IMR-90 (cell line): ENCODE measurements at regions of chr1 and their contacts with region 1.

Region 1: DNA sequence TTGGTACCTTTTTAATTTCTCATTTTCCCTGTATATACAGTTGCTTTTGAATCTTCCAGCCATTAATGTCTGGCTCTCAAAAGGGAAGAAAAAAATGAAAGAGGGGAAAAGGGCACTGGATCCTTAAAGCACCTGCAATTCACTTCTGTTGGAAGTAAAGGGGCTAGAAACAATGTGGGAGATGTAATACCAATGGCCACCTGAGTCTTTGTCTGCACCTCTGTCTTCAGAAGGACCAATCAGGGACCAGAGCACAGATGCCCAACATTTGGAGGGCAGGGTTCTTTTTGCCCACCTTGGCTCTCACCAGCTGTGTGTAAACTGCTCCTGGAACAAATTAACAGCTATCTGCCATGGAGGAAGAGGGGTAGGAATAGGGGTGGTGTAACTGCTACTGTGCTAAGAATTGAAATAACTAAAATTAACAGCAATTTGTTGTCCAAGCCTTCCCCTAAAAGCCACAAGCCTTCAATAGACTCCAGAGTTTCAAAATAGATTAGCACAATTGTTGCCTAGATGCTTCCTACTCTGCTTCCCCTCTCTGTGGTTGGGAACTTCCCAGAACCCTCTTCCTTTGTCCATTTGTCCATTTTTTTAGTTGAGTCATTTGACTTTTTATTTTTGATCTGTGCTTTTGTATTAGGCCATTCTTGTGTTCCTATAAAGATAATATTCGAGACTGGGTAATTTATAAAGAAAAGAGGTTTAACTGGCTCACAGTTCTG is 11.5 kb upstream of the LRRC8B start:
- DNase-seq: no peak
- ATAC-seq: no peak
- H3K4me3 ChIP-seq: no peak overlapping the region
- H3K27ac ChIP-seq: no peak overlapping the region
- H3K4me1 ChIP-seq: peaks cover 2% of the 10 kb centered on the region; the same call in 1 of the 2 replicates
- H3K27me3 ChIP-seq: no peaks in the 10 kb centered on the region
- CTCF ChIP-seq: no peak
- POLR2A ChIP-seq: no peak
- RAD21 ChIP-seq: no peak

Region 2: GRCh38 chr1:89706700-89707012 is 193.5 kb after region 1 on chr1:
- CTCF ChIA-PET with region 1: no interaction called
- POLR2A ChIA-PET with region 1: no interaction called
- dilution Hi-C with region 1: no loop called
- in situ Hi-C with region 1: no loop called
- intact Hi-C with region 1: no loop called
- DNase-seq: no peak
- ATAC-seq: no peak
- H3K4me3 ChIP-seq: no peak overlapping the region
- H3K27ac ChIP-seq: no peak overlapping the region
- H3K4me1 ChIP-seq: no peaks in the 10 kb centered on the region
- H3K27me3 ChIP-seq: no peaks in the 10 kb centered on the region
- CTCF ChIP-seq: no peak
- POLR2A ChIP-seq: no peak
- RAD21 ChIP-seq: no peak

Region 3: DNA sequence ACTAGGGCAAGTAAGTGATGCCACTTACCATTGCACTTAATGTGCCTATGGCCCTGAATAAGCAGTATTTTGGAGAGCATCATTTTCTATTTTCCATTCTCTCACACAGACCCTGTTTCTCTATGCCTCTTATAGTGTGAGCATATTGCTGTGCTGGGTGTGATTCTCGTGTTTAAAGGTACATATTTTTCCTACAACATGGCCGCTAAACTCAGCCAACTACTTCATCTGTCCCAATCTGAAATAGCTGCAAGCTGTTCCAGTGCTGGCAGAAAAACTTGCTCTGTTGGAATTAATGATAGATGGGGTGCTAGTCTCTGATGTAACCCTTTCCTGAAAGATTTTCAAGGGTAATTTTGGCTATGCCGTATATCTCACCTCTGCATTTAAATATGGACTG is 579.3 kb after region 1 on chr1:
- CTCF ChIA-PET with region 1: no interaction called
- POLR2A ChIA-PET with region 1: no interaction called
- dilution Hi-C with region 1: no loop called
- in situ Hi-C with region 1: no loop called
- intact Hi-C with region 1: loop called (anchors 5 kb)
- DNase-seq: no peak
- ATAC-seq: no peak
- H3K4me3 ChIP-seq: no peak overlapping the region
- H3K27ac ChIP-seq: no peak overlapping the region
- H3K4me1 ChIP-seq: no peaks in the 10 kb centered on the region
- H3K27me3 ChIP-seq: no peaks in the 10 kb centered on the region
- CTCF ChIP-seq: no peak
- POLR2A ChIP-seq: no peak
- RAD21 ChIP-seq: no peak